ENCODE measurements at regions of chr7 and their contacts with region 1.

Region 1: GRCh38 chr7:13257661-13258060 is 570.2 kb downstream of the ARL4A start:
- DNase-seq: no peak
- H3K4me3 ChIP-seq: no peak overlapping the region
- H3K27ac ChIP-seq: no peak overlapping the region
- H3K4me1 ChIP-seq: no peaks in the 10 kb centered on the region
- CTCF ChIP-seq: no peak

Region 2: DNA sequence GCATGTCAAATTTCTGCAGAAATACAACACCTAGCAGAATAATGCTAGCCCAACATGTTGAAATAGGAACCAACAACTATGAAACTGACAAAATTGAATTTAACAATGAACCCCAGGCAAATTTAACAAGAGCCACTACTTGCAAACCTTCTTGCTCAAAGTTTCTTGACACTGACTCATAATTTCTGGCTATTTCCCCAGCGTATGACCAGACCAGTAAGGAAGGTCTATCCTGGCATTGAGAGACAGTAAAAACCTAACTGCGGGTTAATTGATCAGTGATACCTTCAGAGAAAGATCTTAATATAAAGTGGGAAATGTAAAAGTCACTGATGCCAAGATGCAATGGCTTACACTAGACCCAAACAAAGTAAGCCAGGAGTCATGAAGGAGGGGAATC is 60.2 kb before region 1 on chr7:
- CTCF ChIA-PET with region 1: no interaction called
- POLR2A ChIA-PET with region 1: no interaction called
- intact Hi-C with region 1: loop called (anchors 10 kb)
- DNase-seq: no peak
- H3K4me3 ChIP-seq: no peak overlapping the region
- H3K27ac ChIP-seq: no peak overlapping the region
- H3K4me1 ChIP-seq: no peaks in the 10 kb centered on the region
- CTCF ChIP-seq: no peak

Measured in OCI-LY7 (cell line).